Activated B cell treated with CpG ODN at 0.5 μM for 24 hours (primary cell): ENCODE measurements at regions of chr1 and their contacts with region 1.

Region 1: GRCh38 chr1:101288491-101288944 is 51.7 kb downstream of the S1PR1 start:
- DNase-seq: no peak
- ATAC-seq: peak; percentile 62
- H3K4me3 Mint-ChIP-seq: no peak overlapping the region
- H3K27ac Mint-ChIP-seq: no peak overlapping the region
- H3K4me1 Mint-ChIP-seq: peaks cover 50% of the 10 kb centered on the region
- H3K27me3 Mint-ChIP-seq: no peaks in the 10 kb centered on the region
- CTCF ChIP-seq: peak; percentile 97

Region 2: DNA sequence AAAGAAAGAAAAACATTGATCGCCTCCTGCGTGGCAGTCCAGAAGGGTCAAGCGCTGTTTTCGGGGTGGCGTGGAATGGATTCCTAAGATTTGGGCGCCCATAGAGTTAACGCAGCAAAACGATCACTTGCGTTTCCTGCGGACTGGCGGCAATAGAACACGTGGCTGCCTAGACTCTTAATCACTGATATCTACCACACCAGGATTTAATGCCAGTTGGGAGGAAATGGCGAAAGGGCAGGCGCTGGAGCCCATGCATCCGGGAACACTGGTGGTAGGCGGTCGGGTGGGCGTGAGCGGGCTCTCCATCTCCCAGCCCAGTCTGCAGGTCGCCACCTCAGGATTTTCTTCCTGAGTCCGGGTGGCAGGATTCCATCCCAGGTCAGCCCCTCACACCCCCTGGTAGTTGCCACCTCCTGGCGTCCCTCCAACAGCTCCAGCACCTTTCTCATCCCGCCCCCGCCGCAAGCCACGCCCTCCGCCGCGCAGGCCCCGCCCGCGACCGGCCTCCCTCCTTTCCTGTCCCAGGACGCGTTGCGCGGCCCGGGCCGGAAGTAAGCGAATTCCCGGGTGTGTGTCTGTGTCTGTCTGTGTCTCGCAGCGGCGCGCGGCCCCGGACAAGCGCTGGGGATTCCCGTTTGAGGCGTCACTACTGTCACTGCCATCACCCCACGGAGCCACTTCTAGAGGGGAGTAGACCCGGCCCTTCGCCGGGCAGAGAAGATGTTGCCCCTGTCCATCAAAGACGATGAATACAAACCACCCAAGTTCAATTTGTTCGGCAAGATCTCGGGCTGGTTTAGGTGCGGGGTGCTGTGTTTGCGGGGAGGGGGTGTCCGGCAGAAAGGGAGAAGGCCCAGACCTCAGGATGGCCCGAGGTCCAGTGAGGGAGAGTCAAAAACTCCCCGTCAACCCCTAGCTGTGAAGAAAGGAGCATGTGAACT is 392.7 kb before region 1 on chr1 and contains the start of gene SLC30A7:
- CTCF ChIA-PET with region 1: interaction called, 10 read pairs
- POLR2A ChIA-PET with region 1: interaction called, 4 read pairs
- intact Hi-C with region 1: no loop called
- DNase-seq: peak; percentile 97
- ATAC-seq: peak; percentile 86
- H3K4me3 Mint-ChIP-seq: peak within 1 kb of the TSS; percentile 98
- H3K27ac Mint-ChIP-seq: peak within 1 kb of the TSS; percentile 95
- H3K4me1 Mint-ChIP-seq: peaks cover 29% of the 10 kb centered on the region
- H3K27me3 Mint-ChIP-seq: no peaks in the 10 kb centered on the region
- CTCF ChIP-seq: no peak
- total RNA-seq, gene SLC30A7: 21.1 and 25.7 TPM in 2 replicates

Region 3: GRCh38 chr1:101025657-101026504 is 262.6 kb before region 1 on chr1 and contains the start of gene DPH5:
- CTCF ChIA-PET with region 1: interaction called, 3 read pairs
- POLR2A ChIA-PET with region 1: interaction called, 7 read pairs
- intact Hi-C with region 1: loop called (anchors 2 kb)
- DNase-seq: peak; percentile 77
- ATAC-seq: peak; percentile 95
- H3K4me3 Mint-ChIP-seq: peak within 1 kb of the TSS; percentile 97
- H3K27ac Mint-ChIP-seq: peak within 1 kb of the TSS; percentile 98
- H3K4me1 Mint-ChIP-seq: peaks cover 66% of the 10 kb centered on the region
- H3K27me3 Mint-ChIP-seq: no peaks in the 10 kb centered on the region
- CTCF ChIP-seq: no peak
- total RNA-seq, gene DPH5: 45.2 and 51.9 TPM in 2 replicates

Region 4: DNA sequence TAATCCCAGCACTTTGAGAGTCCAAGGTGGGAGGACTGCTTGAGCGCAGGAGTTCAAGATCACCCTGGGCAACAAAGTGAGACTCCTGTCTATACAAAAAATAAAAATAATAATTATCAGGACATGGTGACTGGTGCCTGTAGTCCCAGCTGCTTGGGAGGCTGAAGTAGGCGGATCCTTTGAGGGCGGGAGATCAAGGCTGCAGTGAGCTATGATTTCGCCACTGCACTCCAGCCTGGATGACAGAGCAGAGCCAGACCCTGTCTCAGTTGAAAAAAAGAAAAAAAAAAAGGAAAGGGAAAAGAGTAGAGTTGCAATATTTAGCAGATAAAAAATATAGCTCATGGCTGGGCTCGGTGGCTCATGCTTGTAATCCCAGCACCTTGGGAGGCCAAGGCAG is 55.1 kb before region 1 on chr1:
- CTCF ChIA-PET with region 1: interaction called, 58 read pairs
- POLR2A ChIA-PET with region 1: interaction called, 30 read pairs
- intact Hi-C with region 1: loop called (anchors 1 kb)
- DNase-seq: no peak
- ATAC-seq: no peak
- H3K4me3 Mint-ChIP-seq: no peak overlapping the region
- H3K27ac Mint-ChIP-seq: peak overlapping the region; percentile 6
- H3K4me1 Mint-ChIP-seq: peaks cover 39% of the 10 kb centered on the region
- H3K27me3 Mint-ChIP-seq: no peaks in the 10 kb centered on the region
- CTCF ChIP-seq: no peak

Region 5: DNA sequence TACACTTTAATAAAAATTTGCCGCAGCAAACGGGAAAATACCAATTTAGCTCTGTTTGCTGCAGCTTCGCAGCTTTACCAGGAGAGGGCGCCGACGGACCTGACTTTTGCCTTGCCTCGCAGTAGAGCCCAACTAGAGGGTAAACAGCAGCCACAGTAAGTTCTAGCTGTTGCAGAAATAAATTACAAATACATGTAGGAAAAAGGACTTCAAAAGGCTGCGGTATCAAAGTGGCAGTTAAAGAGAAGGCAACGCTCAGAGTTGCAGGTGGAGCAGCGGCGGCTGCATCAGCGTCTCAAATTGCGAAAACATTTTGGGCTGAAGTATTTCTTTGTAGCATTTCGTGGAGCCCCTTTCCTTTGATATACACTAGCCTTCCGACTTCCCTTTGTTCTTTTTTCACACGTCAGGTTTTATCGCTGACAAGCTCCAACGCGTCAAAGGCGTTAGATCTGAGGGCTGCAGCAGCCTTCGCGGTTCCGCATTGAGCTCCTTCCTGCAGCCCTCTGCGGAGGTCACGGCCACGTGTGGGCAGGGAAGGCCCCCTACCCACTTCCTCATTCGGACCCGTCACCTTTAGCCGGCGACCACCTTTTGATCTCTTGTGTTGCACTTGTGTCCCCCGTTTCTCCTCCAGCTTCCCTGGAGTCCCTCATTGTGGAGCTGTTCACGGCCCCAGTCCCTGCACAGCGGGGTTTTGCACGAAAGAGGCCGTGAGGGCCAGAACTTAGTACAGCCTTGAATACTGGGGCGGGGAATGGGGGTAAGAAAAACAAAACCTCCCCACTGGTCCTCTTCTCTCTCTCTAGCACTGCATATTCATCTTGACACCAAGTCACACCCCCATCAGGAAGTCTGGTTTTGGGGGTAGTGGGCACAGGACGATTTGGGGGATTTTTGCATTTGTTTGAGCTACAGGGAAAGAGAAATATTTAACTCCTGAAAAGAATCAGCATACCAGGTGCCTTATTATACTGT is 21.1 kb after region 1 on chr1:
- CTCF ChIA-PET with region 1: interaction called, 38 read pairs
- POLR2A ChIA-PET with region 1: interaction called, 66 read pairs
- intact Hi-C with region 1: loop called (anchors 1 kb)
- DNase-seq: peak; percentile 57
- ATAC-seq: peak; percentile 75
- H3K4me3 Mint-ChIP-seq: peak overlapping the region; percentile 82
- H3K27ac Mint-ChIP-seq: peak overlapping the region; percentile 94
- H3K4me1 Mint-ChIP-seq: peaks cover 78% of the 10 kb centered on the region
- H3K27me3 Mint-ChIP-seq: no peaks in the 10 kb centered on the region
- CTCF ChIP-seq: peak; percentile 77

Region 6: GRCh38 chr1:101438359-101438758 is 149.8 kb after region 1 on chr1:
- CTCF ChIA-PET with region 1: interaction called, 20 read pairs
- POLR2A ChIA-PET with region 1: interaction called, 12 read pairs
- intact Hi-C with region 1: loop called (anchors 1 kb)
- DNase-seq: no peak
- ATAC-seq: peak; percentile 29
- H3K4me3 Mint-ChIP-seq: no peak overlapping the region
- H3K27ac Mint-ChIP-seq: no peak overlapping the region
- H3K4me1 Mint-ChIP-seq: peaks cover 42% of the 10 kb centered on the region
- H3K27me3 Mint-ChIP-seq: no peaks in the 10 kb centered on the region
- CTCF ChIP-seq: no peak